Activated naive CD4-positive, alpha-beta T cell treated with anti-CD3 and anti-CD28 coated beads for 36 hours (primary cell): ENCODE measurements at regions of chr3 and their contacts with region 1.

Region 1: DNA sequence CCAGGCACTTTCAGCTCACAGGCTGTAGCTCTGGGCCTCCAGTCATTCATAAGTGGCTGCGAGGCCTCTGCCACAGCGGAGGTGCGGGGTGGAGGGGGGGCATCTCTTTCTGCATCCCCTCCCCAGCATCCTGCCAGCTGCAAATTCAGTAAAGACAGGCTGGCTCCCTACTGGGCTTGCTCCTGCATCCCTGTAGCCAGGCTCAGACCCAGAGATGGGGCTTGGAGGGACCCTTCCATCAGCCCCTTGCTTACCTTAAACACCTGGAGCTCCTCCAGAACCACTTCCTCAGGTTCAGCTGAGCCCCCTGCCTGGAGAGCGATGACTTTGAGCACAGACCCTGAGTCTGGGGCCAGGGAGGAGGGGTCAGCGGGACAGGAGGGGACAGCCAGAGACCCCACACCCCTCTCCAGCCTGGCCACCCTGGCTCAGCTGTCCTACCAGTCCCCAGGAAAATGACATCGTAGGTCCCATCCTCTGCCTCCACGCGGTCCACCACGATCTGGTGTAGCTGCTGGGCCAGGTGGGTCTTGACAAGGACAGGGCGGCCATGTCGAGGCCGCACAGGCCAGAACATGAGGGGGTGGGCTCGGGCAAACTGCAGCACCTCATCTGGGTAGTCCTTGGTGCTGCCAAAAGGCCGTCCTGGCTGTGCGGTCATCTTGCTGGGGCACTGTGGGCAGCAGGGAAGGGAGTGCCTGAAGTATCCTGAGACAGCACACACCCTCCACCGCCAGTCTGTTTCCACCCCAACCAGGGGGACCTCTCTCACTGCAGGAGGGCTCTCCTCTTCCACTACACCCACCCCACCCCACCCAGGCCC is 5.3 kb downstream of the SEMA3G start:
- DNase-seq: no peak
- H3K4me3 Mint-ChIP-seq: no peak overlapping the region
- H3K27ac Mint-ChIP-seq: no peak overlapping the region
- H3K4me1 Mint-ChIP-seq: no peaks in the 10 kb centered on the region
- H3K27me3 Mint-ChIP-seq: no peaks in the 10 kb centered on the region

Region 2: GRCh38 chr3:52428151-52429005 is 11.3 kb before region 1 on chr3:
- CTCF ChIA-PET with region 1: interaction called, 81 read pairs
- intact Hi-C with region 1: no loop called
- DNase-seq: peak; percentile 64
- H3K4me3 Mint-ChIP-seq: no peak overlapping the region
- H3K27ac Mint-ChIP-seq: no peak overlapping the region
- H3K4me1 Mint-ChIP-seq: no peaks in the 10 kb centered on the region
- H3K27me3 Mint-ChIP-seq: no peaks in the 10 kb centered on the region

Region 3: DNA sequence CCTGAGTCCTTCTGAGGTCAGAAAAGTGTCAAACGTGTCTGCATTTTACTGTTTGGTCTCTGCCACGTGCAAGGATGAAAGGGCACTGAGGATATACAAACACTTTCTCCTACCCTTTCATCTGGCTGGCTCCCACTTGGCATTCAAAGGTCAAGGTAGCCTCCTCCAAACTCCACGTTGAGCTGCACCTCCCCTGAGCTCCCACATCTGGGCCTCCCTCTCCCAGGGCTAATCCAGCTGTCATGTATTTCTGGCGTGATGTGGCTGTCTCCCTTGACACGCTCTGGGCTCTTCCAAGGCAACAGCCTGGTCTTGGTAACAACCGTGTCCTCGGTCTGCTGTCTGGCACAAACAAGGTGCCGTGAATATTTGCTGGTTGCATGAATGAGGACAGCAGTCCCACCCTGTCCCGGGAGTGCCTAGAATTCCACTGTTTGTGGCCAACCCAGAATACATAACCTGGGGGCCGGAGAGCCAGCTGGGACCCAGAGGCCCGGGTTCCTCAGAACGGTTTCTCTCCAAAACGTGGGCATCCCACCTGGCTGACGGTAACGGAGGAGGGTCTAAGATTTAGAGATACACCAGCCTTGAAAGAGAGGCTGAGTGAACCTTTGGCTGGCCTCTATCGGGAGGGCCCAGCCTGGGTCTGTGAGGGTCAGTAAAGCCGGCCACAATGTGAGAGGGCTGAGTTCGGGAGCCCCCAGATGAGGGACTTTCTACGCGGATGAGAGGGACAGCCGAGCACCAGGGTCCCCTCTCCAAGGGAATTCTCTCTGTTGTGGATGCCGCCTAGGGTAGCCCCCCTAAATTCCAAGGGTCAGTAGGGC is 265.2 kb after region 1 on chr3:
- CTCF ChIA-PET with region 1: no interaction called
- intact Hi-C with region 1: no loop called
- DNase-seq: peak; percentile 29
- H3K4me3 Mint-ChIP-seq: peak overlapping the region; percentile 94
- H3K27ac Mint-ChIP-seq: peak overlapping the region; percentile 87
- H3K4me1 Mint-ChIP-seq: peaks cover 27% of the 10 kb centered on the region
- H3K27me3 Mint-ChIP-seq: no peaks in the 10 kb centered on the region